Aorta (tissue), 5 donors: ENCODE measurements at regions of chr10 and their contacts with region 1.

Region 1: GRCh38 chr10:32049113-32049512 is 7.1 kb downstream of the KIF5B start:
- DNase-seq: no peak
- ATAC-seq: no peak
- H3K4me3 ChIP-seq: no peak overlapping the region
- H3K27ac ChIP-seq: no peak overlapping the region
- H3K4me1 ChIP-seq: peaks cover 5 to 9% of the 10 kb centered on the region in 2 donors
- H3K27me3 ChIP-seq: no peaks in the 10 kb centered on the region

Region 2: DNA sequence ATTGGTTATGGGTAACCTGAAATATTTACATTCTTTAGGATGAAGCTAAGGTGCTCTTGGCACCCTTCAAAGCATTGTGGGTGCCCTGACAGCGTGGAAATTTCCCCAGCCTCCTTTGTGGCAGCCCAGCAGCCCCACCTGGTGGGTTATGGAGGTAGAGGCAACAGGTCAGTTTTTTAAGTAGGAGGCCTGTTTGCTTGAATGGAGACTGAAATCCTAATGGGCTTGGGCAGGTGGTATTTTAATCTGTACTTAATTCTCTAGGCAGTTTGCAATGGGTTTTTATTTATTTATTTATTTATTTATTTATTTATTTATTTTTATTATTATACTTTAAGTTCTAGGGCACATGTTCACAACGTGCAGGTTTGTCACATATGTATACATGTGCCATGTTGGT is 158.4 kb after region 1 on chr10:
- intact Hi-C with region 1: loop called in 1 of 2 experiments (anchors 10 kb)
- DNase-seq: peak; percentile 51 to 76
- ATAC-seq: no peak
- H3K4me3 ChIP-seq: no peak overlapping the region
- H3K27ac ChIP-seq: no peak overlapping the region
- H3K4me1 ChIP-seq: no peaks in the 10 kb centered on the region
- H3K27me3 ChIP-seq: no peaks in the 10 kb centered on the region